Sigmoid colon (tissue), 7 donors: ENCODE measurements at regions of chr16 and their contacts with region 1.

Region 1: DNA sequence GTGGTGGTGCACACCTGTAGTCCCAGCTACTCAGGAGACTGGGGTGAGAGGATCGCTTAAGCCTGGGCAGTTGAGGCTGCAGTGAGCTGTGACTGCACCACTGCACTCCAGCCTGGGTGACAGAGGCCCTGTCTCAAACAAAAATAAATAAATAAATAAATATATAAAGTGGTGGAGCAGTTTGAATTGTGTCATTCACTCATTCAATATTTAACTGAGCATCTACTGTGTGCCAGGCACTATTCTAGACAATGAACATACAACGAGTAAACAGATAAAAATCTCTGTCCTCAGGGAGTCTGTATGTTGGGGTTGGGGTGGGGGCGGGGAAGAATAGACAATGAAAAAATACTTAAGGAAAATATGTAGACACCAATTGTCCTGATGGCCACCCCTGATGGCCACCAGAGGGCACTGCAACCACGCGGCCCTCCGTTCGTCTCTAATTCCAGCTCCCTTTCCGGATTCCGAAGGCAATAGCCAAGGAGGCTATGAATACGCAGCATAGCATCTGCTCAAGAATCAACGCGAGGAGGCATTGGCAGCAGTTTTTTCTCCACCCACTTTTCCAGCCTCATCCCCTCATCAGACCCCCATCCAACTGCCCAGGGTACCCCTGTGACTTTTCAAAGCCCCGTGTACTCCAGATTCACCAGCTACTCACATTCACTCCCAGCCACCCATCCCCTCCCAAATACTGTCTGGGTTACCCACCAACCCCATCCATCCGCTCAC is 21.4 kb downstream of the QPRT start:
- DNase-seq: peak; percentile 89
- H3K4me3 ChIP-seq: no peak overlapping the region
- H3K27ac ChIP-seq: no peak overlapping the region
- H3K4me1 ChIP-seq: peaks cover 0 to 3% (median 2%) of the 10 kb centered on the region in 4 donors
- H3K27me3 ChIP-seq: no peaks in the 10 kb centered on the region
- CTCF ChIP-seq: peak; percentile 51 to 92 (median 68)
- EP300 ChIP-seq: no peak
- POLR2A ChIP-seq: no peak

Region 2: DNA sequence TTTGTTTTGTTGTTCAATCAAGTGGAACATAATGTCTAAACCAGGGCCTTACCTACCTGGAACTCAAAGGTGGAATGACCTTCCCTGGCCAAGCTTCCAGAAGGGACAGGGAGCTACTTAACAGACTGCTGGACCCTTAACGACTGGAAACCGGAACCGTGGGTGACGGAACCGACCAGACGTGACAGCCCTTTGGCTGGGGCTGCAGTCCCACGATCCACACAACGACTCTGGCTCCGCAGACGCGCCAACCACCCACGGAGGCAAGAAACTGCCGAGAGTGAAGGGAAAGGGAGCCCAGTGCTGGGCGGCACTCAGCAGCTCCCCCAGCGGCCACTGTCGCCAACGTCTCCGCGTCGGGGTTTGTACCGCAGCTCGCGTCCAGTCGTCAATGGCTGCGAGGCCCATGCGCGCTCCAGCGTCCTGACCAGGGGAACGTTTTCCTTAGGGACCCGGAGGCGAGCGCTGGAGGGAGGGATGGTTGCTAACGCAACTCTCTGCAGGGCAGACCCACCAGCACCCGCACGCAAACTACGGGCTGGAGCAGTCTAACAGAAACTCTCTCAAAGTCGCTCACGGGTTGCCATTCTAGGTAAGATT is 84.6 kb after region 1 on chr16:
- intact Hi-C with region 1: loop called (anchors 5 kb)
- DNase-seq: peak; percentile 84
- H3K4me3 ChIP-seq: peak overlapping the region in 3 of 4 donors; percentile 27 to 33 (median 33)
- H3K27ac ChIP-seq: no peak overlapping the region
- H3K4me1 ChIP-seq: peaks cover 0 to 18% (median 6%) of the 10 kb centered on the region in 4 donors
- H3K27me3 ChIP-seq: no peaks in the 10 kb centered on the region
- CTCF ChIP-seq: peak; percentile 25 to 84 (median 65)
- EP300 ChIP-seq: no peak
- POLR2A ChIP-seq: no peak

Region 3: DNA sequence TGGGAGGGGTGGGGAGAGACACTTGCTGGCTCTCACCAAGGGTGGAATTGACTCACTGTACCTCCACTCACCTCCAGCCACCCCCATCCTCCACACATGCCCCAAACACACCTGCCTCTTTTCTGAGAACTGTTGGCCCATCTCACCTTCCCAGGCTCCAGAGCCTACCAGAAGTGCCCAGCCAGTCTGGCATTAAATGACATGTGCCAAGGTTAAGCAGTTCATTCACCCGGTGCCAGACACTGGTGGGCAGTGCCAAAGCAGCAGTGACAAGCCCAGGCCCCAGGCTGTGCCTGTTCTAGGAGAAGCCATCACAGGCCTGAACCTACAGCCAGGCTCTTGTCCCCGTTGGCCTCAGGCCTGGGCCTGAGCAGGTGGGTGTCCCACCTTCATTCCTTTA is 131.1 kb after region 1 on chr16:
- intact Hi-C with region 1: no loop called
- DNase-seq: no peak
- H3K4me3 ChIP-seq: no peak overlapping the region
- H3K27ac ChIP-seq: no peak overlapping the region
- H3K4me1 ChIP-seq: peaks cover 0 to 19% (median 8%) of the 10 kb centered on the region in 4 donors
- H3K27me3 ChIP-seq: no peaks in the 10 kb centered on the region
- CTCF ChIP-seq: no peak
- EP300 ChIP-seq: no peak
- POLR2A ChIP-seq: no peak

Region 4: GRCh38 chr16:29848420-29849297 is 148.2 kb after region 1 on chr16:
- intact Hi-C with region 1: loop called (anchors 2 kb)
- DNase-seq: peak; percentile 86
- H3K4me3 ChIP-seq: no peak overlapping the region
- H3K27ac ChIP-seq: peak overlapping the region in 3 of 4 donors; percentile 9 to 29 (median 23)
- H3K4me1 ChIP-seq: peaks cover 0 to 16% (median 1%) of the 10 kb centered on the region in 4 donors
- H3K27me3 ChIP-seq: no peaks in the 10 kb centered on the region
- CTCF ChIP-seq: peak; percentile 72 to 89 (median 83)
- EP300 ChIP-seq: no peak
- POLR2A ChIP-seq: no peak

Region 5: DNA sequence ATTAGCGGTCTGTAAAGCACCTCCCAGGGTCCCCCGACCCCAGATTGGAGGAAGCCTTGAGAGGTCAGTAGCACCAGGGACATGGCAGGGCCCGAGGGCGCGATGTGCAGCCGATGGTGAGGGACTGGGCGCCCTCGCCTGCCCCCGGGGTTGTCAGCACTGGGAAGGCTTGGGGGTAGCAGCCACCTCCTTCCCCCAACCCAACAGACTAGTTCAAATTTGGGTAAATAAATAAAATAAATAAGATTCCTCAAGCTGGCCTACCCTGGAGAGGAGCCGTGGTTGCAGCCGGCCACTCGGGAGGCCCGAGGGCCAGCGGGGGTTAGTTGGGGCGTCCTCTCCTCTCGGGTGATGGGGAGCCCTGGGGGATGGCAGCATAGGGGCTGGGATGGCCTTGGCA is 324.0 kb after region 1 on chr16:
- intact Hi-C with region 1: loop called (anchors 5 kb)
- DNase-seq: no peak
- H3K4me3 ChIP-seq: no peak overlapping the region
- H3K27ac ChIP-seq: no peak overlapping the region
- H3K4me1 ChIP-seq: peaks cover 0 to 12% (median 11%) of the 10 kb centered on the region in 4 donors
- H3K27me3 ChIP-seq: peaks cover 11 to 45% (median 28%) of the 10 kb centered on the region in 3 donors
- CTCF ChIP-seq: no peak
- EP300 ChIP-seq: no peak
- POLR2A ChIP-seq: no peak